Ascending aorta (tissue), 2 donors: ENCODE measurements at regions of chrX and their contacts with region 1.

Region 1: GRCh38 chrX:100685284-100685996 is 41.4 kb downstream of the SRPX2 start:
- DNase-seq: peak in 1 of 2 donors; percentile 85
- H3K4me3 ChIP-seq: no peak overlapping the region
- H3K27ac ChIP-seq: no peak overlapping the region
- H3K4me1 ChIP-seq: no peaks in the 10 kb centered on the region
- H3K27me3 ChIP-seq: no peaks in the 10 kb centered on the region
- CTCF ChIP-seq: peak; percentile 69 to 81 (median 80)

Region 2: DNA sequence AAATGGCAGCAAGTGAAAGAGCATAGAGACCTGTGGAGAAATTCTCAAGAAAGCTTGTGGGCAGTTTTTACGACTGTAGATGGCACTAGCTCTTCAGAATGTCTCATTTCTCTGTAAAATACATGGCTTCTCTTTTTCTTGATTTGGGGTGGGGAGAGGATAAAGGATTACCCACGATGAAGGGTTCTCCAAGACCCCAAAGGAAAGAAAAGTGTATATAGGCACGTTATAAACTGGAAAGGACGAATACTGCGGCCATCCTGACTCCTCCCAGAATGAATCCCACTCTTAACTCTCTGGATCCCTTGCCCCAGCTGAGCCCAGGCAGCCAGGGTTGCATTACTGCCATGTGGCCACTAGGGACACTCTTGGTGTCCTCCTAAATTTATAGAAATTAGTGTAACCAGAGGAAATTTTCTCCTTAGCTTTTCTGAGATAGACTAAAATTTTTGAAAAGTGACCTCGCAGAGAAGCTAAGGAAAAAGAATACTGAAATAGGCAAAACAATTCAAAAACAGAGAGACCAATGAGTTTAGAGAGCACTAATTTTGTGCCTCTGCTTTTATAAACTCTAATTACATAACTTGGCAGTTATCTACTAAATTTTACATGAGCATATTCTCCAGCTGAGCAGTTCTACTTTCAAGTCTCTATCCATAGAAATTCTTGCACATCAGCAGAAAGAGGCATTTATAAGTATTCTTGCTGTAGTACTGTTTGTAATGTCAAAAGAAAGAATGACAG is 237.6 kb before region 1 on chrX:
- intact Hi-C with region 1: no loop called
- DNase-seq: peak in 1 of 2 donors; percentile 64
- H3K4me3 ChIP-seq: peak overlapping the region in 1 of 2 donors; percentile 14
- H3K27ac ChIP-seq: no peak overlapping the region
- H3K4me1 ChIP-seq: no peaks in the 10 kb centered on the region
- H3K27me3 ChIP-seq: no peaks in the 10 kb centered on the region
- CTCF ChIP-seq: peak; percentile 45 to 87 (median 84)

Region 3: DNA sequence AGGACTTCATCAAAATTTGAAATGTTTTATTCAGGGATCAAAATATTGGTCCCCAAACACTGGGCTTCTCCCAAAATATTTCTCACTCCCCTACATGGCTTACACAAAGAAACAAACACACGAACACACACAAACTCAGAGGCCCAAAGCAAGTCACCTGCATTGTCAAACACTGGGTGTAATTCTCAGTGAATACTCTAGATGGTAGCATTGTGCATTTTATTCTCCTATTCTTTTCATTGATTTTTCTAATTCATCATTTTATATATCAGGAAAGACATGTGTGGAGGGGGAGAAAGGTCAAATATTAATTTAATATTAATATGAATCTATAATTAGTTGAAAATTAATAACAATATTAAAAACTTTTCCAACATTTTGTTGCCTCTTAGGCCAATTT is 173.0 kb before region 1 on chrX:
- intact Hi-C with region 1: loop called (anchors 10 kb)
- DNase-seq: no peak
- H3K4me3 ChIP-seq: no peak overlapping the region
- H3K27ac ChIP-seq: no peak overlapping the region
- H3K4me1 ChIP-seq: no peaks in the 10 kb centered on the region
- H3K27me3 ChIP-seq: no peaks in the 10 kb centered on the region
- CTCF ChIP-seq: peak; percentile 28 to 74 (median 64)